ENCODE measurements at regions of chr22 and their contacts with region 1.

Region 1: GRCh38 chr22:32354360-32355351 is 3.0 kb upstream of the RFPL3 start:
- DNase-seq: no peak
- H3K4me3 ChIP-seq: no peak overlapping the region
- H3K27ac ChIP-seq: no peak overlapping the region
- H3K4me1 ChIP-seq: peaks cover 0 to 9% (median 1%) of the 10 kb centered on the region in 4 experiments; a peak in 4 of 7 replicates
- H3K27me3 ChIP-seq: no peaks in the 10 kb centered on the region
- CTCF ChIP-seq: no peak
- EP300 ChIP-seq: no peak
- POLR2A ChIP-seq: no peak
- RAD21 ChIP-seq: no peak

Region 2: DNA sequence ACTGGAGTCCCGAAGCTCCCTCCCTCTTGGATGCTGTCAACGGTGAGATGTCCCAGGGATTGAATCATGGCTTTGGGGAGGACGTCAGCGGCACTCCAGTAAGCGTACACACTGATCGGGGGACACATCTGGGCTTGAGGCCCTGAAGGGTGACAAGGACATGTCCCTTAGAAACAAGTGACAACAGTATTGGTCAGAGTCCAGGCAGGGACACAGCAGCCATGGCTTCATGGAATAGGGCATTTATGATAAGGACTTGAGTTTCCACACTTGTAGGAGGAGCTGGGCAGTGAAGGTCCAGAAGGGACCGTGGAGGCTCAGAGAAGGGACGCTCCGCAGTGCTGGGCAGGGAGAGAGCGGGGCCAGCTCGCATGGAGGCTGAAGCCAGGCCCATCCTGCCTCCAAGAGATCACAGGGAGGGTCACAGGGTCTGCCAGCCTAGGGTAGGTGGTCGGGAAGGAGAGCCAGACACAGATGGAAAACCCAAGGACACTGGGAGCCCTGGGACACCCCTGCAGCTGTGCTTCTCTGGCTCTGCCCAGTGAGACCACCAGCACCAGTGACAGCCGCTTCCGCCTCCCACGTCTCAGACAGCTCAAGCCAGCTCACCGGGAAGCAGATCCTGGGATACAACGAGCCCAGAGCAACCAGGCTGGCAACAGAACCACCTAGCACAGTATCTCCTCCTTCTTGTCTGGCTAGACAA is 19.8 kb before region 1 on chr22:
- CTCF ChIA-PET with region 1: interaction called, 3 read pairs
- POLR2A ChIA-PET with region 1: interaction called, 11 read pairs
- DNase-seq: peak in 1 of 2 experiments; percentile 34
- H3K4me3 ChIP-seq: no peak overlapping the region
- H3K27ac ChIP-seq: no peak overlapping the region
- H3K4me1 ChIP-seq: peaks cover 4 to 13% (median 6%) of the 10 kb centered on the region in 4 experiments; a peak in 5 of 7 replicates
- H3K27me3 ChIP-seq: peaks cover 0 to 1% (median 0%) of the 10 kb centered on the region in 4 experiments; a peak in 1 of 7 replicates
- CTCF ChIP-seq: no peak
- EP300 ChIP-seq: no peak
- POLR2A ChIP-seq: no peak
- RAD21 ChIP-seq: no peak

Measured in H1 (cell line).